ENCODE measurements at regions of chr17 and their contacts with region 1.

Region 1: DNA sequence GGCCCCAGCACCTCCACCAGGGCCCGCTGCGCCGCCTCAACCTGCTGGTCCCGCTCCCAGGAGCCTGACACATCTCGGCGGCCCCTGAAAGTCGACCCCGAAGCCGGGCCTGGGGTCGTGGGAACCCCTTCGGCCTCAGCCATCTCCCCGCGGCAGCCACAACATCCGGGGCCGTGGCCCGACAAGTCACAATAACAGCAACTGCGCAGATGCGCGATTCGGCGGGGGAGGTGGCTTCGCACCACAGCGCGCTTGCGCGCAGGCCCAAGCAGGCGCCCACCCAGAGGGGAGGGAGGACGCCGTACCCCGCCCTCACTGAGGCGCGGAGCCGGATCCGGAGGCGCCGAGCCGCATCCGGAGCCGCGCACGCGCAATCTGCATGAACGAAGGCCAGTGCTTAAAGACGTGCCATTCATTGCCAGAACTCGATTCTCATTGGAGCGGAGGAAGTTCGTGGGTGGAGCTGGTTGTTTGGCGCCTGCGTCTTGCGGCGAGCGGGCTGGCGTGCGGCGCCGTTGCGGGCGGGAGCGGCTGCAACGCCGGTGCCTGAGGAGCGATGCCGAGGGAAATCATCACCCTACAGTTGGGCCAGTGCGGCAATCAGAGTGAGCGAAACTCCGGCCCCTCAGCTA is at the starts of genes RETREG3 and TUBG1:
- DNase-seq: peak; percentile 99
- total RNA-seq, gene RETREG3: 50.5 and 90.2 TPM in 2 replicates
- total RNA-seq, gene TUBG1: 74.8 and 76.6 TPM in 2 replicates

Region 2: DNA sequence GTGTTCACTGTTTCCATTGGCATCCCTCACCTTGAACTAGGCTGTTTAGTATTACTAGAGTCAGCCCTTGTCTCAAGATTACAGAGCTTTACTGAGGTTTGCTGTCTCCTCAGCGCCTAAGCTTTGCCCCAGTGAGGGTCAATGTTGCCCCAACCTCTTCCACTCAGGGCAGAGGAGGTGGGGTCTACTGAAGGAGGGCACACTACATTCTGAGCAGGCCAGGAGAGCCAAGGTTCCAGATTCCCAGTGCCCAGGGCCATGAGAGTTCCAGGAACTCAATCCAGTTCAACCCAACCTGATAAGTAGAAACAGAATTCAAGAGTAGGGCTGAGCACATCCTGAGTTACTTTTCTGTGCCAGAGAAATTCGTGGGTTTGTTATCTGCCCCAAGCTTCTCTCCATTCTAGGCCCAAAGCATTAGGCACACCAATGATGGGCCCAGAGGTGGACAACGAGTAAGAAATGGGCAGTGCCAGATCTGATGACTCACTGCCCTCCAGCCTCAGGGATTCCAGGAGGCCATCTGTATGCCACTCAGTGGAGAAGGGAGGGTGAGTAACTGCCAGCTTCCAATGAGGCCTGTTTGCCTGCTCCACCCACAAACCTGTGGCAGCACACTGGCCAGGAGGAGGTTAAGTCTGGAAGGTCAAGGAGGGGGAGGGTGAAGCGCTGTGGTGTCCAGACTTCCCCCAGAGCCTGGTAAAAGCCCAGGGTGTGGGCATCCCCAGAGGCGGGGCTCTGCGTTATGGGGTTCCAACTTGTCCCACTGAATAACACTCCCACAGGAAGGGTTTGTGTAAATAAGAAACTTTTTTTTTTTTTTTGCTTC is 58.0 kb after region 1 on chr17:
- in situ Hi-C with region 1: loop called (anchors 10 kb)
- DNase-seq: peak; percentile 95

Region 3: GRCh38 chr17:42744806-42745617 is 135.7 kb after region 1 on chr17 and contains the start of gene EZH1:
- in situ Hi-C with region 1: loop called (anchors 25 kb)
- DNase-seq: peak; percentile 91
- total RNA-seq, gene EZH1: 8.2 and 21.3 TPM in 2 replicates

Measured in Caki2 (cell line).